ENCODE measurements at regions of chr15 and their contacts with region 1.

Region 1: GRCh38 chr15:36863570-36863969 is 236.8 kb downstream of the MEIS2 start:
- DNase-seq: no peak
- ATAC-seq: no peak
- H3K4me3 ChIP-seq: no peak overlapping the region
- H3K27ac ChIP-seq: no peak overlapping the region
- H3K4me1 ChIP-seq: no peaks in the 10 kb centered on the region
- H3K27me3 ChIP-seq: no peaks in the 10 kb centered on the region

Region 2: DNA sequence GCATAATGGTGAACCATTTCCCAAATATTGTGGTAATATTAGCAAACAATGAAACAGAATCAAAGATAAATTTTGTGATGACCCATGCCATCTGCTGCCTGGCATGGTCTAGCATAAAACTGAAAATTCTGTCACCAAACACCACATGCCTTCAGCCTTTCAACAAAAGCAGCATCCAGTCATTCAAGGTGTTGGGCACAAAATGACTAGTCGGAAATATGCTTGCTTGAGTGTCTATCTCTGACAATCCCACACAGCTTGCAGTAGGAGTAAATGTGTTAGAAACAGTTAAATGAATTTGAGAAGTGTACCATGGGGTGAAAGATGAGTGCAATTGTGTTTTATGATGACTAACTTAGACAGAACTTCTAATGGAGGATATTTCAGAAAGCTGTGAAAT is 345.8 kb before region 1 on chr15:
- intact Hi-C with region 1: loop called in 1 of 2 experiments (anchors 10 kb)
- DNase-seq: no peak
- ATAC-seq: no peak
- H3K4me3 ChIP-seq: no peak overlapping the region
- H3K27ac ChIP-seq: no peak overlapping the region
- H3K4me1 ChIP-seq: peaks cover 0 to 1% of the 10 kb centered on the region in 2 donors
- H3K27me3 ChIP-seq: no peaks in the 10 kb centered on the region

Region 3: DNA sequence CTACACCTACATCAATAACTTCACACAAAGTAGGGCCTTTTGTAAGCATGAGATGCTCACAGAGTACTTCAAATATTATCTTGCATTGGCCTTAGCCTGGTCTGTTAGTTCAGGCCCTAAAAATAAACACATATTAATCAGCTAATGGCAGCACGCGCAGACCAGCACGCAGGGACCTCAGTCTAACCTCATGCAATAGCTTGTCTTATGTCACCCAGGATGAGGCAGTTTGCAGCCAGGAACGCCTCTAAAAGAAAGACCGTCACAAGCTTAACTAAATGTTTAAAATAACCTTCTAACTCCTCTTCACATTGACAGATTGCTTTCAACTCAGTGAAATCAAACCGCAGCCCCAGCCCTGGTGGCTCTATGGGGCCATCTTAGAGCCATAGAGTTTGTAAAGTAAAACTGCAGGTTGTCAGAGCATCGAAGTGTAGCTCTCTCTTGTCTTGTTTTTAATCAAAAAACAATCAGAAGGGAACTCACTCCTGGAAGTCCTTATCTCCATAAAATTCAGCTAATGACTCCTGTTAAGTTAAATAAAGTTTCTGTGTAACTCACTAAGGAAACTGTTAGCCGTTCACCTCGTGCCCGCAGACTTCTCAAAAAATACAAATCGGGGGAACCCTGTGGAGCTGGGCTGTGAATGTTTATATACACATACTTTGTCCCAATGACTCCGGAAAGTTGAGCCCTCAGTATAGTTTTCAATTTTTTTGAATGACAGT is 71.6 kb before region 1 on chr15:
- intact Hi-C with region 1: no loop called
- DNase-seq: no peak
- ATAC-seq: no peak
- H3K4me3 ChIP-seq: no peak overlapping the region
- H3K27ac ChIP-seq: no peak overlapping the region
- H3K4me1 ChIP-seq: no peaks in the 10 kb centered on the region
- H3K27me3 ChIP-seq: no peaks in the 10 kb centered on the region